ENCODE measurements at regions of chr10 and their contacts with region 1.

Region 1: GRCh38 chr10:27742195-27743011 is 3.2 kb downstream of the MKX start:
- DNase-seq: peak; percentile 81 to 95 (median 91)
- ATAC-seq: peak; percentile 93 to 96
- H3K4me3 ChIP-seq: peak overlapping the region; percentile 89
- H3K27ac ChIP-seq: no peak overlapping the region
- H3K4me1 ChIP-seq: no peaks in the 10 kb centered on the region
- H3K27me3 ChIP-seq: no peaks in the 10 kb centered on the region

Region 2: DNA sequence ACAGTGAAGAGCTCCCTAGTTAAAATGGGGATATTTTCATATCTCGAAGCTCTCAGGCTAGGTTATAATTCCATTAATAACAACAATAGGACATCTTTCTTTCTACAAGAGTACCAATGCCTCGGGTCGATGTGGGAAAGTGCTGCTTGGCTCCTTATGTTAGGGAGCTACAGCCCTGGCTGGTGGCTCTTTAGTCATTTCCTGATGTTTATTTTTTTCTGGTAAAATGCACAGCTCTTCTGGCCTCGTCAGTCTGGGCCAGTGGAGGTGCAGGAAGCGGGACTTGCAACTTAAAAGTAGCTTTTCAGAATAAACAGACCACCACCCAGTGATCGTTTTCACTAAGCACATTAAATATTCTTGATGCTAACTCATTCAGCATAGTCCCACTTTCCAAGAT is 55.1 kb before region 1 on chr10:
- intact Hi-C with region 1: no loop called
- DNase-seq: no peak
- ATAC-seq: no peak
- H3K4me3 ChIP-seq: no peak overlapping the region
- H3K27ac ChIP-seq: no peak overlapping the region
- H3K4me1 ChIP-seq: no peaks in the 10 kb centered on the region
- H3K27me3 ChIP-seq: no peaks in the 10 kb centered on the region

Region 3: DNA sequence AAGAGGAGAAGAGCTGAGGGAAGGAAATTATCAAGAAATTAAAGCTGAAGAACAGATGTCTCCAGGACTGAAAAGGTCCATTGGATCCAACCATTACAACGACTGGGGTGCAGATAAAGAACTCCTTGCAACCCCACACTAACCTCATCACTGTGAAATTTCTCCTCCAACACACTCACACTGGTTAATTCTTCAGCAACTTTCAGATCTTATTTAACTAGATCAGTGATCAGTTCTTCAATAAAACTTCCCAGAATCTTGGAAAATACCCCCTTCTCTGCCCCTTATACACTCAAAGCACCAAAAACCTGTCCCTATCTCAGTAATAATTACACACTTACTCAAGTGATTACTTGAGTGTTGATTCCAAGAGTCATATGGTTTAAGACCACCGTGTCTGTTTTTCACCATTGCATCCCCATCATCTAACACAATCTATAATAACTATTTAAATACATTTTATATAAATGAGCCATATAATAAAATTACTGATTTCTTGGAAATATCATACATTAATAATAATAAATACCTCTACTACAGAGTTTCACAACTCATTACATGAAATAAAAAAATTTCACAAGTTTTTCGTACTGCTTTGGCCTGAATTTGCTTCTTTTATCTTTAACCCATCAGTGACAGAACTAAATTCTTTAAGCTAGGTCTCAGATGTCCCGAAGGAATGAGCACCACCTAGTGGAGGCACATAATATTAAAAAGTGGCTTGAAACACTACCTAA is 436.8 kb after region 1 on chr10:
- intact Hi-C with region 1: loop called in 2 of 4 experiments (anchors 5 to 10 kb)
- DNase-seq: no peak
- ATAC-seq: peak in 1 of 2 donors; percentile 45
- H3K4me3 ChIP-seq: no peak overlapping the region
- H3K27ac ChIP-seq: no peak overlapping the region
- H3K4me1 ChIP-seq: no peaks in the 10 kb centered on the region
- H3K27me3 ChIP-seq: no peaks in the 10 kb centered on the region

Region 4: DNA sequence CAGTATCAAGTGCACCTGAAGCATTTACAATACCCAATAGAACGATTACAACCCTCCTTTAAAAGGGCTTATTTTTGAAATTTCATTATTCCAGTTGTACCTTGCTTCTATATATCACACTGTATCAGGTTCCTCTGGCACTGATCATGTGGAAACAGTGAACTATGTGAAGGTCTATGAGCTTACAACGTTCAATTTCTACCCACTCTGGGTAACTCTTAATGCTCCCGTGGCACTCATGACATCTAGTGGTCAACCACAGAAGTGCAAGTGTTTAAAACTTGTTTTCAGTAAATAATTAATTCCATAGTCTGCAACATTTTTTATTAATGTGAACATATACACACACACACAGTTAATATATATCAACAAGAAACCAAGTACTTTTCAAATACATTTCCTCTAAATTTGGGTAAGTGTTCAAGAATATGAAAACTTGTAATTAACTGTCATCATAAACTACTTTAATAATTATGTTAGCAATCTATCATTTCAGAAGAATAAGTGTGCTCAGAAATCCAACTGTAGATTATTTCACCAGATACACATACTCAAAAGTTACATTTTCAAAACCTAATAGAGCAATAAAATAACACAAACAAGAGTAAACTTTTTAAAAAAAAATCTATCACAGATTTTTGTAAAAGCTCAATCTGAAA is 499.5 kb after region 1 on chr10:
- intact Hi-C with region 1: loop called in 1 of 4 experiments (anchors 5 kb)
- DNase-seq: no peak
- ATAC-seq: peak; percentile 72 to 75
- H3K4me3 ChIP-seq: no peak overlapping the region
- H3K27ac ChIP-seq: no peak overlapping the region
- H3K4me1 ChIP-seq: no peaks in the 10 kb centered on the region
- H3K27me3 ChIP-seq: no peaks in the 10 kb centered on the region

Measured in right cardiac atrium (tissue), 5 donors.